Endothelial cell of umbilical vein (primary cell): ENCODE measurements at regions of chr4 and their contacts with region 1.

Region 1: DNA sequence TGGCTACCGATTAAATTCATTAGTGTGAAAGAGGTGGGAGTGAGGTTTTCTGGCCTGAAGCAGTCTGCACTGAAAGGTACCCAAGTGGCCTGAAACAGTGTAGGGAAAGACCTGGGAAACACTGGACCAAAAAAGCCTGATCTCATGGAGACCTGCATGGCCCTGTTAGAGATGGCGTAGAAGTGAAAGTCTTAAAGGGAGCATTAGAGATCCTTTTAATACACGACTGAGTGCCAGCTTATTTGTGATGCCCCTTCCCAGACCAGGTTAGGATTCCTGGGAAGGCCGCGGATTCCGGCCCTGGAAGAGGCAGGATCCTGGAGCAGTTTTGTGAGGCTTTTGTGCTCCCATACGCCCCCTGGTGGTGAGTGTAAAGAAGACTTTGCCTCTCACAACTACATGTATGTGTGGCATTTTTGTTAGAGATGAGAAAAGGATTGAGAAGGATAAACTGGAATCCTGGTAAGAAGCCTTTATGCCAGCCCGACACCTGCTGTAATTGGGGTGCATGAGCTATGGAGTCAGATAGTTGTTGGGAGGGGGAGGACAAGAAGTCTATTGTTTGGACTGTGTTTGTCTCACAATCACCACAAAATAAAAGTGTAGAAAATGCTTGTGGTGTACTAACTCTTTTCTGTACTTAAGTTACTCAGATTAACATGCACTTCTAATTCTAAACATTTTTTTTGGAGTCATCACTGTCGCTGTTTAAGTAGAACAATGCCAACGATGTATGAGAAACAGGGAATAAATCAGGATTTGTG is 54.0 kb downstream of the JADE1 start:
- DNase-seq: peak; percentile 81
- H3K4me3 ChIP-seq: no peak overlapping the region
- H3K27ac ChIP-seq: no peak overlapping the region
- H3K4me1 ChIP-seq: peaks cover 11% of the 10 kb centered on the region
- H3K27me3 ChIP-seq: no peaks in the 10 kb centered on the region
- CTCF ChIP-seq: peak; percentile 78 to 83
- POLR2A ChIP-seq: no peak

Region 2: DNA sequence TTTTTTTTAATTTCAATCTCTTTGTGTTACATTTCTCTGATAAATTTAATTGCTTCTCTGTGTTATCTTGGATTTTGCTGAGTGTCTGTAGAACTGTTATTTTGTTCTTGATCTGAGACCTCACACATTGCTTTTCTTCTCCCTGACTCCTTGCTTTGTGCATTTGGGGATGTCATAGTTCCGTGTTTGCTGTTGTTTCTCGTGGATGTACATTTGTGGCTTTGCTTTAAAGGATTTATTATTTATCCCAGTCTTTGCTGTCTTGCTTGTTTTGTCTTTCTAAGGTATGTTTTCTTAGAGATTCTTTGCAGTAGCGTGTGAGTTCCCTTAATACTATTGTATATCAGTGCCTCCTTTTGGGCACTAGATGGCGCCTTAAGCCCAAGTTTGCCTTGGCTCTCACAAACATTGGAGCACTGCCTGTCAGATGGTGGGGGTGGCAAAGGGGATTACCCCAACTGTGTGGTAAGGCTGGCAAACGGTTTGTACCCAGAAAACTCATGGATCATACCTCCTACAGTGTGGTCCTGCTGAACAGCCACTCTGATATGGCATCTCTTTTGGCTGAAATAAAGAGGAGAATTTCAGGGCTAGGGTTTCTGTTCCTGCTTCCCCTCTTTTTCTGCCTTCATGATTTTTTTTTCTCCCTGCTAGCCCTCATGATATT is 672.2 kb before region 1 on chr4:
- CTCF ChIA-PET with region 1: interaction called, 18 read pairs
- POLR2A ChIA-PET with region 1: no interaction called
- dilution Hi-C with region 1: no loop called
- intact Hi-C with region 1: loop called (anchors 1 kb)
- DNase-seq: peak; percentile 76
- H3K4me3 ChIP-seq: no peak overlapping the region
- H3K27ac ChIP-seq: no peak overlapping the region
- H3K4me1 ChIP-seq: no peaks in the 10 kb centered on the region
- H3K27me3 ChIP-seq: no peaks in the 10 kb centered on the region
- CTCF ChIP-seq: peak; percentile 71 to 75
- POLR2A ChIP-seq: no peak

Region 3: GRCh38 chr4:128386761-128387599 is 476.5 kb before region 1 on chr4:
- CTCF ChIA-PET with region 1: interaction called, 3 read pairs
- POLR2A ChIA-PET with region 1: no interaction called
- dilution Hi-C with region 1: no loop called
- intact Hi-C with region 1: loop called (anchors 1 kb)
- DNase-seq: peak; percentile 94
- H3K4me3 ChIP-seq: no peak overlapping the region
- H3K27ac ChIP-seq: peak overlapping the region; percentile 34
- H3K4me1 ChIP-seq: peaks cover 15% of the 10 kb centered on the region
- H3K27me3 ChIP-seq: no peaks in the 10 kb centered on the region
- CTCF ChIP-seq: no peak
- POLR2A ChIP-seq: no peak

Region 4: DNA sequence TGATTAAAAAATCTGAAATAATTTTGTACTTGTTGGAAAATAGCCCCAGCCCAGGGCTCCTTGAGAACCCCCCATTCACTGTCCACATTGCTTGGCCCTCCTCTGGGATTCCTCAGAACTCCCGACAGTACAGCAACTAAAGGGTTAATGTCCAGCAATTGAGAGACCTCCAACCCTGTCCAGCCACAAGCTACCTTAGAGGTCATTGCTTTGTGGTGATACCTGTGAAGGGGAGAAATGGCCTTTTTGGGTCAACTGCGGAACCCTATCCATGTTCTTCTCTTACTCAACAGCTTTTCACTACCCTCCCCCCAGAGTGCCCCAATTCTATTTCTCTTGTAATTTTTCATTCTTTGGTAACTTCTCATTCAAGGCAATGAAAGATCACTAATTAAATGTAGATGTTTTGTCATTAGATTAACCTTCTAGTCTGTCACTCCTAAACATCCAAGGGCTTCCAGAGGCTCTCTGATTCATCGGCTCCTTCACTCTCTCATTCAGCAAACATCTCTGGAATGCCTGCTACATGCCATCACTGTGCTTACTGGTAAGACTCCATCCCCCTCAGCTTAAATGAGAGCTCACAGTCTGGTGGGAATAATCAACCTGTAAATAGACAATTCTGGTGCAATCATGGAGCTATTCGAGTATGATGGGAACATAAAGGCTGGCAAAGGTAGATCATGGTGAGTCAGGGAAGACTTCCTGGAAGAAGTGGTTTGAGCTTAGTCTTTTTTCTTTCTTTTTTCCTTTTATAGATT is 334.5 kb before region 1 on chr4:
- CTCF ChIA-PET with region 1: no interaction called
- POLR2A ChIA-PET with region 1: no interaction called
- dilution Hi-C with region 1: no loop called
- intact Hi-C with region 1: loop called (anchors 5 kb)
- DNase-seq: peak; percentile 88
- H3K4me3 ChIP-seq: no peak overlapping the region
- H3K27ac ChIP-seq: peak overlapping the region; percentile 95
- H3K4me1 ChIP-seq: peaks cover 29% of the 10 kb centered on the region
- H3K27me3 ChIP-seq: no peaks in the 10 kb centered on the region
- CTCF ChIP-seq: no peak
- POLR2A ChIP-seq: no peak

Region 5: DNA sequence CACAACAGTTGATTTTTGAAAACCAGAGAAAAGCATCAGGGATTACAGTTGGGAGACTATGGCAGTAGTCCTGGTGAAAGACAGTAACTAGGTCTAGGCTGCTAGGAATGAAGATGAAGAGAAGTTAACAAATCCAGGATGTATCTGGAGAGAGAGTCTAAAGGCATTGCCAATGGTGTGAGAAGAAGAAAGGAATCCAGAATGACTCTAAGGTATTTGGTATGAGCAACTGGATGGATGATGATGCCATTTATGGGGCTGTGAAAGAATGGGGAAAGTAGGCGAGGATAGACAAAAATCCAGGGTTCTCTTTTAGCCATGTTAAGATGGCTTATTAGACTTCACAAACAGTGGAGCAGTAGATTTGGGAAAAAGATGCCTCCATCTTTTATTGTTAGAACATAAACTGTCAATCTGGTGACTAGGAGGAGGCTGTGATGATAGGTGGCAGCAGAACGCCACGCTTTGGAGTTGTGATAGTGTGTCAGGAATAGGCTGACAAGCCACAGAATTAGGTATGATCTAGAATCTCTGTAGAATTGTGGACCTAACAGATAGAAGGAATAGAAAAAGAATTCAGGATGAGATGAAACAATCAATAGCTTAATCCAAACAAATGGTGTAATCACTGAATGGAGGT is 81.3 kb before region 1 on chr4:
- CTCF ChIA-PET with region 1: no interaction called
- POLR2A ChIA-PET with region 1: no interaction called
- dilution Hi-C with region 1: no loop called
- intact Hi-C with region 1: loop called (anchors 1 kb)
- DNase-seq: no peak
- H3K4me3 ChIP-seq: no peak overlapping the region
- H3K27ac ChIP-seq: no peak overlapping the region
- H3K4me1 ChIP-seq: no peaks in the 10 kb centered on the region
- H3K27me3 ChIP-seq: no peaks in the 10 kb centered on the region
- CTCF ChIP-seq: no peak
- POLR2A ChIP-seq: no peak

Region 6: DNA sequence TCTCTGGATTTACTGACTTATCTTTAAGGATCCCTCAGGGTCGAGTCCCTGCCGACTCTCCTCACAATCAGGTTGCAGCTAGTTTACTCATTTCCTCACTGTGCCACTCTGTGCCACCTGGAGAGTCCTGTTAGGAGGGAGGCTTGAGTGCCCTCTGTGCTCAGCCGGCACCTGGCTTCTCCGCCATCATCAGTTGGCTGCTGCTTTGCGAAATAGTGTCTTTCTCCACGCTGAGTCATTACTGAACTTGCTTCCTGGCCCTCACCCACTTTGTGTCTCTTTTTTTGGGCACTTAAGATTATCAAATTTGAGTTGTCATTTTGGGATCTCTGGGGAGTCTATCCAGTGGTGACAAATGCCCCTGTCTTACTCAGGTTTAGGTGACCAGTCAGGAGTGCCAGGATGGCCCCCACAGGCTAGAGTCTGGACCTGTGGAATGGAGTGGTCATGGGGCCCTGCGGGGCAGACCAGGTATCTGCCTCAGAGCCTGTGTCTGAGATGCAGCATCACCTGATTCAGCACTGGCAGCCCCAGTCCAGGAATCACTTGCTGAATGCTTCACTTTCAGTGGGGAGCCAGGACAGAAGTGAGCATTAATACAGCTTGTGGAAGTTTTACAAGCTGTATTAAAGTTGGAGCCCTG is 16.3 kb before region 1 on chr4:
- CTCF ChIA-PET with region 1: no interaction called
- POLR2A ChIA-PET with region 1: no interaction called
- dilution Hi-C with region 1: no loop called
- intact Hi-C with region 1: no loop called
- DNase-seq: no peak
- H3K4me3 ChIP-seq: no peak overlapping the region
- H3K27ac ChIP-seq: no peak overlapping the region
- H3K4me1 ChIP-seq: no peaks in the 10 kb centered on the region
- H3K27me3 ChIP-seq: no peaks in the 10 kb centered on the region
- CTCF ChIP-seq: no peak
- POLR2A ChIP-seq: no peak